ENCODE measurements at regions of chr6 and their contacts with region 1.

Region 1: GRCh38 chr6:129498950-129499842 is 210.8 kb downstream of the ARHGAP18 start:
- DNase-seq: peak; percentile 84
- H3K4me3 ChIP-seq: peak overlapping the region; percentile 11
- H3K27ac ChIP-seq: no peak overlapping the region
- H3K4me1 ChIP-seq: peaks cover 36% of the 10 kb centered on the region
- H3K27me3 ChIP-seq: no peaks in the 10 kb centered on the region
- CTCF ChIP-seq: peak; percentile 71

Region 2: GRCh38 chr6:128598565-128598964 is 900.6 kb before region 1 on chr6:
- CTCF ChIA-PET with region 1: no interaction called
- POLR2A ChIA-PET with region 1: no interaction called
- intact Hi-C with region 1: no loop called
- DNase-seq: no peak
- H3K4me3 ChIP-seq: no peak overlapping the region
- H3K27ac ChIP-seq: no peak overlapping the region
- H3K4me1 ChIP-seq: peaks cover 50% of the 10 kb centered on the region
- H3K27me3 ChIP-seq: no peaks in the 10 kb centered on the region
- CTCF ChIP-seq: no peak

Region 3: GRCh38 chr6:129567374-129567773 is 68.2 kb after region 1 on chr6:
- CTCF ChIA-PET with region 1: interaction called, 4 read pairs
- POLR2A ChIA-PET with region 1: no interaction called
- intact Hi-C with region 1: loop called (anchors 2 kb)
- DNase-seq: peak; percentile 53
- H3K4me3 ChIP-seq: no peak overlapping the region
- H3K27ac ChIP-seq: no peak overlapping the region
- H3K4me1 ChIP-seq: no peaks in the 10 kb centered on the region
- H3K27me3 ChIP-seq: no peaks in the 10 kb centered on the region
- CTCF ChIP-seq: peak; percentile 72

Region 4: DNA sequence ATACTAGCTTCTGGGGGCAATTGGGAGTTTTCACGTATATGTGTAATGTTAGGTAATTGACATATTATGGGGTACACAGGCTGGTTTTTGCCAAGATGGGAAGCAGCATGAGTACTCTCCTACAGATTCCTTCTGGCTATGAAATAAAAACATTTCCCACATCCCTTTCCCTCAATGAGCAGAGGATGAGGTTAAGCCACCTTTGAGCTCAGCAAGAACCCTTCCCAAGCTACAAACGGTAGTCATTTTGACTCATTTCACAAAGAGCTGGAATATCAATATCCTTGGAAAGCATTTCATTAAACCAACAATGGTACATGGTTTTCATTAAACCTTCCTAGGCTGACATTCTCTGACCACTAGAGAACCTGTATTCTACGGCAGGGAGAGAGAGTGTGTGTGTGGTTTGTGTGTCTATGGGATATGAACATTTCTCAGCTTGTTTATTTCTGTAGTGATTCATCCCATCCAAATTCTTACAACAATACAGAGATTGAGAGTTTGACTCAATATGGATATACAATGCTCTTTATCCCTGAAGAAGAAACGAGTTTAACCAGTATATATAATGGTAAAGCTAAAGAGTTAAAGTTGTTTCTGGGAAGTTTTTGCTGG is 91.3 kb after region 1 on chr6:
- CTCF ChIA-PET with region 1: no interaction called
- POLR2A ChIA-PET with region 1: no interaction called
- intact Hi-C with region 1: loop called (anchors 5 kb)
- DNase-seq: no peak
- H3K4me3 ChIP-seq: no peak overlapping the region
- H3K27ac ChIP-seq: no peak overlapping the region
- H3K4me1 ChIP-seq: no peaks in the 10 kb centered on the region
- H3K27me3 ChIP-seq: no peaks in the 10 kb centered on the region
- CTCF ChIP-seq: no peak

Region 5: DNA sequence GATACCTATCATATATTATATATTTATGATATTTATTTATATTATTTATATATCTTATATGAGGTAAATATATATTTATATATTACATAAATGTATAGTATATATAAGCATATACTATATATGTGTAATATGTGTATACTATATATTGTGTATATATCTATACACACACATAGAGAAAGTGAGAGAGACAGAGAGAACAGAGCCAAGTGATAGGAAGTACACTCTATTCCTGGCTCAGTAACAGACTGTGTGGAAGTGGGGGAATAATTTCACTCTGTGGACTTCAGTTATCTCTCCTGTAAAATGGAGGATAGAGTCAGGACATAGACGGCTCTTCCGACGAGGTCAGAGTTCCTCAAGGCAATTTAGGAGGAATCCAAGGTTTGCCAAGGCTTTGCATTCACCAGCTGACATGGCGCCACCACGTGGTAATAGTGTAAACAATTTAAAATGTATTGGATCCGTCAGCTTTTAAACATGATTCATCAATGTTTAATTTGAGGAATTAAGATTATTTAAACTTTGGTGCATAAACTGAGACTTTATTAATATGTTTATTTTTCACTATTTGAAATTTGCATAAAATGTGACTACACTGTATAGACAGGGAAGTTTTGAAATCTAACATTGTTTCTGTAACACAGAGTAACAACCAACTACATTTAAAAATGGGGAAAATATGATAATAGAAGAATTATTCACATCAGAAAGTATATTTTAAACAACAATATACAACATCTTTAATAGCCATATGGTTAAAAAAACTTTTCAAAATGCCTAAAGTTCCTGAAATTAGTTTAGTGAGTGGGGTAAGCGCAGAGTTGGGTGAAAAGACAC is 437.4 kb after region 1 on chr6:
- CTCF ChIA-PET with region 1: no interaction called
- POLR2A ChIA-PET with region 1: no interaction called
- intact Hi-C with region 1: loop called (anchors 10 kb)
- DNase-seq: peak; percentile 90
- H3K4me3 ChIP-seq: no peak overlapping the region
- H3K27ac ChIP-seq: no peak overlapping the region
- H3K4me1 ChIP-seq: peaks cover 3% of the 10 kb centered on the region
- H3K27me3 ChIP-seq: no peaks in the 10 kb centered on the region
- CTCF ChIP-seq: peak; percentile 87